ENCODE measurements at regions of chr17 and their contacts with region 1.

Region 1: GRCh38 chr17:78013683-78014467 is 55.4 kb downstream of the TNRC6C start:
- DNase-seq: peak in 1 of 2 donors; percentile 43
- ATAC-seq: peak; percentile 44 to 78 (median 70)
- H3K4me3 ChIP-seq: no peak overlapping the region
- H3K27ac ChIP-seq: no peak overlapping the region
- H3K4me1 ChIP-seq: peaks cover 0 to 18% (median 10%) of the 10 kb centered on the region in 9 donors
- H3K27me3 ChIP-seq: no peaks in the 10 kb centered on the region
- CTCF ChIP-seq: peak; percentile 45 to 89 (median 77)

Region 2: GRCh38 chr17:77331301-77331864 is 682.5 kb before region 1 on chr17:
- intact Hi-C with region 1: loop called in 1 of 10 experiments (anchors 10 kb)
- DNase-seq: peak; percentile 94 to 95
- ATAC-seq: peak; percentile 86 to 94 (median 91)
- H3K4me3 ChIP-seq: peak overlapping the region in 6 of 10 donors; percentile 26 to 46 (median 34)
- H3K27ac ChIP-seq: peak overlapping the region in 7 of 10 donors; percentile 15 to 80 (median 62)
- H3K4me1 ChIP-seq: peaks cover 0 to 40% (median 12%) of the 10 kb centered on the region in 9 donors
- H3K27me3 ChIP-seq: no peaks in the 10 kb centered on the region
- CTCF ChIP-seq: peak; percentile 92 to 98 (median 96)

Region 3: DNA sequence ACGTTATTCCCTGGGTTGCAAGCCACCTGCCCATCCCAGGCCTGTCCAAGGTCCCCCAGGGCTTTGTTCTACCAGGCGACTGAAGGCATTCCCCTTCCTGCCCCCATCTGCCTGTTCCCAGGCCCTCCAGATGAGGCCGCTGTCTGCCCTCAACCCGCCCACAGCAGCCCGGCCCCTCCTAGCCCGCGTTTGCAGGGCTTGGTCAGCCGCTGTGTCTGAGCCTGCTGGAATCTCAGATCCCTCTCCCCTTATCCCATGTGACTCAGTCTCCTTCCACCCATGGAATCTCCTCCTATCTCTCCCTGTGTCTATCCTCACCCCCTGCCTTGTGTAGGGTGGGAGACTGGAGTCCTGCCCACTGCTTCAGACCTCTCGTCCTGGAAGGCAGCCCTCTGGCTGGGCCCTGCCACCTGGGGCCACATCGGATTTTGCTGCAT is 241.4 kb before region 1 on chr17:
- intact Hi-C with region 1: loop called in 9 of 10 experiments (anchors 2 to 5 kb)
- DNase-seq: peak; percentile 73 to 76
- ATAC-seq: peak; percentile 84 to 95 (median 92)
- H3K4me3 ChIP-seq: no peak overlapping the region
- H3K27ac ChIP-seq: peak overlapping the region in 6 of 10 donors; percentile 2 to 53 (median 22)
- H3K4me1 ChIP-seq: peaks cover 8 to 16% (median 13%) of the 10 kb centered on the region in 9 donors
- H3K27me3 ChIP-seq: no peaks in the 10 kb centered on the region
- CTCF ChIP-seq: peak; percentile 56 to 90 (median 80)

Region 4: GRCh38 chr17:77778636-77779489 is 235.0 kb before region 1 on chr17:
- intact Hi-C with region 1: loop called in 5 of 10 experiments (anchors 5 to 10 kb)
- DNase-seq: peak; percentile 71 to 83
- ATAC-seq: peak; percentile 86 to 97 (median 94)
- H3K4me3 ChIP-seq: peak overlapping the region in 5 of 10 donors; percentile 3 to 21 (median 15)
- H3K27ac ChIP-seq: peak overlapping the region in 9 of 10 donors; percentile 38 to 85 (median 79)
- H3K4me1 ChIP-seq: peaks cover 10 to 30% (median 23%) of the 10 kb centered on the region in 9 donors
- H3K27me3 ChIP-seq: no peaks in the 10 kb centered on the region
- CTCF ChIP-seq: no peak

Region 5: DNA sequence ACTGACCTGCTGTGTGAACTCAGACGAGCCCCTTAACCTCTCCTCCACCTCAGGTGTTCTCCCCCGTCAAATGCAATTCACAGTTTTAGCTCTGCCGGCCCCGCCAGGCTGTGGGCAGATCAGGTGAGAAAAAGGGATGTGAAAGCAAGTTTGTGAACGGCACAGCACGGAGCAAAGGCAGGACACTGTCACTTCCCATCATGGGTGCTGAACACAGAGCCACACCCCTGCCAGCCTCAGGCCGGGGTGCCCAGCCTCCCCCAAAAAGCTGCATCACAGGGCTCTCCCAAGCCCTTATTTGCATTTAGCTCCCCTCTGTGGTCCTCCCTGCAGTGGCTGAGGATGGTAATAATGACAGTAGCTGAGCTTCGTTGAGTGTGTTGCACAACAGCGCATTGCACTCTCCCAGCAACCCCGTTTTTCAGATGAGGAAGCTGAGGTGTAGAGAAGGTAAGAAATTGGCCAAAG is 144.2 kb before region 1 on chr17:
- intact Hi-C with region 1: no loop called
- DNase-seq: peak in 1 of 2 donors; percentile 14
- ATAC-seq: peak in 2 of 8 donors; percentile 18 to 19
- H3K4me3 ChIP-seq: peak overlapping the region in 1 of 10 donors; percentile 14
- H3K27ac ChIP-seq: peak overlapping the region in 1 of 10 donors; percentile 74
- H3K4me1 ChIP-seq: peaks cover 0 to 35% (median 9%) of the 10 kb centered on the region in 9 donors
- H3K27me3 ChIP-seq: no peaks in the 10 kb centered on the region
- CTCF ChIP-seq: no peak

Region 6: DNA sequence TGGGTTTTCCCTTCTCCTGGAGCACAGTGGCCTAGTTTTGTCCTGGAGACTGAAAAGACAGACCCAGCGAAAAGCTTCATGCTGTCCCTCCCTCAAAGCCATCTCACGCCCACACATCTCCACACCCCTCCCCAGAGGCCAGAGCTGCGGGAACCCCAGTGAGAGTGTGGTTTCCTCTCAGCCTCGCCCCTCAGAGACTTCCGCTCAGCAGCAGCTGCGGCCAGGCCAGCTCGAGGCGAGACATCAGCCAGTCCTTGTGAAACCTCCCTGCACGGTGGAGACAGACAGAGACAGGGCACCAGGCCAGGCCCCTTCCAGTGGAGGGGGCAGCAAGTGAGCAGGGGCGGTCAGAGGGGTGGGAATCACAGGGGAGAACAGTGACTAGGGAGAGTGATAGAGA is 132.3 kb before region 1 on chr17:
- intact Hi-C with region 1: loop called in 1 of 10 experiments (anchors 10 kb)
- DNase-seq: peak; percentile 89
- ATAC-seq: peak; percentile 83 to 94 (median 92)
- H3K4me3 ChIP-seq: peak overlapping the region in 2 of 10 donors; percentile 10 to 13
- H3K27ac ChIP-seq: peak overlapping the region in 9 of 10 donors; percentile 58 to 93 (median 77)
- H3K4me1 ChIP-seq: peaks cover 25 to 57% (median 37%) of the 10 kb centered on the region in 9 donors
- H3K27me3 ChIP-seq: no peaks in the 10 kb centered on the region
- CTCF ChIP-seq: no peak

Region 7: GRCh38 chr17:77963441-77963840 is 50.4 kb before region 1 on chr17:
- intact Hi-C with region 1: loop called in 4 of 10 experiments (anchors 1 to 10 kb)
- DNase-seq: peak in 1 of 2 donors; percentile 79
- ATAC-seq: peak; percentile 58 to 86 (median 72)
- H3K4me3 ChIP-seq: no peak overlapping the region
- H3K27ac ChIP-seq: peak overlapping the region in 3 of 10 donors; percentile 10 to 35 (median 16)
- H3K4me1 ChIP-seq: peaks cover 2 to 86% (median 70%) of the 10 kb centered on the region in 9 donors
- H3K27me3 ChIP-seq: peaks cover 0 to 13% (median 0%) of the 10 kb centered on the region in 7 donors
- CTCF ChIP-seq: no peak

Measured in heart right ventricle (tissue), 16 donors.